ENCODE measurements at regions of chr11 and their contacts with region 1.

Region 1: GRCh38 chr11:134050541-134051383 is 18.1 kb upstream of the JAM3 start:
- DNase-seq: peak; percentile 72
- ATAC-seq: peak; percentile 86
- H3K4me3 ChIP-seq: no peak overlapping the region
- H3K27ac ChIP-seq: no peak overlapping the region
- H3K4me1 ChIP-seq: peaks cover 11% of the 10 kb centered on the region
- H3K27me3 ChIP-seq: peaks cover 22% of the 10 kb centered on the region; the same call in 1 of the 2 replicates
- CTCF ChIP-seq: peak; percentile 94

Region 2: GRCh38 chr11:134008634-134009071 is 42.1 kb before region 1 on chr11:
- CTCF ChIA-PET with region 1: no interaction called
- POLR2A ChIA-PET with region 1: no interaction called
- intact Hi-C with region 1: no loop called
- DNase-seq: no peak
- ATAC-seq: no peak
- H3K4me3 ChIP-seq: no peak overlapping the region
- H3K27ac ChIP-seq: no peak overlapping the region
- H3K4me1 ChIP-seq: no peaks in the 10 kb centered on the region
- H3K27me3 ChIP-seq: peaks cover 55% of the 10 kb centered on the region
- CTCF ChIP-seq: no peak

Region 3: DNA sequence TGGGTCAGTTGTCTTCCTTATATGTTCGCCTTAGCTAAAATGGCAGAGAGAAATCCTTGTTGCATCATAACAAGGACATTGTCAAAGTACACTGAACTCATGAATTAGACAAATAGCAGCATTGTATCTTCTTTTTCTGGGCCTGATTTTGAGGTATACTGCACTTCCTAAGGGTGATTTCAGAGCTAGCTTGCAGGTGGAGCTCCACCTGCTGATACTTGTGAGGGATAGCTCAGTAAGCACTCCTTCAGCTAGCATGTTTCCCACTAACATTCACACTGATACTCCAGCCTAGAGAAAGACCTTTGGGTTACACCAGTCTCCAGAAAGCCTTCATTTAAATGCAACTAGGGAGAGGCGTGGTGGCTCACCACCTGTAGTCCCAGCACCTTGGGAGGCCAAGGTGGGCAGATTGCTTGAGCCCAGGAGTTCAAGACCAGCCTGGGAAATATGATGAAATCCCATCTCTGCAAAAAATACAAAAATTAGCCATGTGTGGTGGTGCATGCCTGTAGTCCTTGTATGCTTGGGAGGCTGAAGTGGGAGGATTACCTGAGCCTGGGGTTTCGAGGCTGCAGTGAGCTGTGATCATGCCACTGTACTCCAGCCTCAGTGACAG is 47.9 kb after region 1 on chr11:
- CTCF ChIA-PET with region 1: interaction called, 13 read pairs
- POLR2A ChIA-PET with region 1: no interaction called
- intact Hi-C with region 1: loop called (anchors 1 kb)
- DNase-seq: peak; percentile 53
- ATAC-seq: peak; percentile 93
- H3K4me3 ChIP-seq: no peak overlapping the region
- H3K27ac ChIP-seq: no peak overlapping the region
- H3K4me1 ChIP-seq: no peaks in the 10 kb centered on the region
- H3K27me3 ChIP-seq: peaks cover 30% of the 10 kb centered on the region
- CTCF ChIP-seq: peak; percentile 66

Region 4: GRCh38 chr11:134139873-134140331 is 89.1 kb after region 1 on chr11:
- CTCF ChIA-PET with region 1: interaction called, 3 read pairs
- POLR2A ChIA-PET with region 1: no interaction called
- intact Hi-C with region 1: loop called (anchors 1 kb)
- DNase-seq: peak; percentile 86
- ATAC-seq: peak; percentile 83
- H3K4me3 ChIP-seq: no peak overlapping the region
- H3K27ac ChIP-seq: no peak overlapping the region
- H3K4me1 ChIP-seq: no peaks in the 10 kb centered on the region
- H3K27me3 ChIP-seq: peaks cover 52% of the 10 kb centered on the region
- CTCF ChIP-seq: peak; percentile 91

Measured in PC-3 (cell line).